ENCODE measurements at regions of chr7 and their contacts with region 1.

Region 1: GRCh38 chr7:37176079-37176478 is 272.6 kb downstream of the ELMO1 start:
- DNase-seq: no peak
- ATAC-seq: no peak
- H3K4me3 ChIP-seq: no peak overlapping the region
- H3K27ac ChIP-seq: no peak overlapping the region
- H3K4me1 ChIP-seq: no peaks in the 10 kb centered on the region
- H3K27me3 ChIP-seq: no peaks in the 10 kb centered on the region
- CTCF ChIP-seq: no peak

Region 2: DNA sequence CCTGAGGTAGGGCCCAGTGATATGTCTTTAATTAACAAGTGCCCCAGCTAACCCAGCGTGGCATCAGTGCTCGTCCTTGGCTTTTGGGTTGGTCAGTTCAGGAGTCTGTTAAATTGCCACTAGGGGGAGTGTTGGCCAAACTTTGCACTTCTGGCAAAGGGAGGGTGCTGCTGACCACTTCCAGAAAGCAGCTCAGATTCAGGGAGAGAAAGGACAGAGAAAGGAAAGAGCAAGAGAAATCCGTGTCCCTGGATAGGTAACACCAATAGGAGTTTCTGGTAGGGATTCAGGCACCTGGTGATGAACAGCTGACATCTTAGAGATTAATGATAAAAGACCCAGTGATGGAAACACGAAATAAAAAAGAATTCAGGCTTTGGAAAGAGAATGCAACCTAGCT is 208.7 kb before region 1 on chr7:
- intact Hi-C with region 1: loop called (anchors 5 kb)
- DNase-seq: no peak
- ATAC-seq: peak; percentile 88 to 89
- H3K4me3 ChIP-seq: no peak overlapping the region
- H3K27ac ChIP-seq: no peak overlapping the region
- H3K4me1 ChIP-seq: peaks cover 41% of the 10 kb centered on the region
- H3K27me3 ChIP-seq: no peaks in the 10 kb centered on the region
- CTCF ChIP-seq: peak; percentile 86